G401 (cell line): ENCODE measurements at regions of chr22 and their contacts with region 1.

Region 1: GRCh38 chr22:41603873-41604332 is 14.3 kb upstream of the PMM1 start:
- DNase-seq: no peak

Region 2: GRCh38 chr22:41654322-41654721 is 50.4 kb after region 1 on chr22:
- in situ Hi-C with region 1: no loop called
- DNase-seq: no peak

Region 3: GRCh38 chr22:41666661-41667258 is 62.9 kb after region 1 on chr22:
- in situ Hi-C with region 1: loop called (anchors 10 kb)
- DNase-seq: peak; percentile 88